ENCODE measurements at regions of chr5 and their contacts with region 1.

Region 1: DNA sequence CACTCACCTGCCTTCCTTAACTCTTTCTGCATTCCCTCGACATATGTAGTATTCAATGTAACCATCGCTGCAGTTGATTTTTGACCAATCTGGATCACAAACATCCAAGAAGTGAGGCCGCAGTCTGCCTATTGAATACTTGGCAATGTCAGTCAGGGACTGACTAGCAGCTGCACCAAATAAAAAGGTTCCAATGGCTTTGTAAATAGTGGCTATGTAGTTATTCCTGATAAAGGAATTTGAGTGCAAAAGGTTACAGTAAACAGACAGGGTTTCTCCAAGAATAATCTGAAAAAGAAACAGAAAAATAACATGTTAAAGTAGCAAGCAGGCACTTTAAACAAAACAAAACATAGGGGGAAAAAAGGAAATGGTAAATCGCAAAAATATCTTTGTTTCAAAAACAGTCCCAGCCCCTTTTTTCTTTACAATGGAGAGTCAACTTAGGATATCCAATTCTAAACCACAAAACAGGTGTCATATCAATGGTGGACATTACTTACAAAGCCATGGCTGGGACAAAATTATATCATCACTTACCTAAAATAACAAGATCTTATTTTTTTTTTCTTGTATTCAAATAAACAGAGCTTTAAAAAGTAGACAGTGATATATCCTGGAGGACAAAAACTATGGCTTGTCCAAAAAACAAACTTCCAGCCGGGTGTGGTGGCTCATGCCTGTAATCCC is 66.8 kb downstream of the PLPP1 start:
- DNase-seq: no peak
- ATAC-seq: no peak
- H3K4me3 ChIP-seq: no peak overlapping the region
- H3K27ac ChIP-seq: no peak overlapping the region
- H3K4me1 ChIP-seq: 0 out of 2 replicates have a peak, but pooled peaks cover 7% of the 10 kb centered on the region
- H3K27me3 ChIP-seq: no peaks in the 10 kb centered on the region
- CTCF ChIP-seq: no peak
- EP300 ChIP-seq: no peak
- POLR2A ChIP-seq: no peak
- RAD21 ChIP-seq: no peak

Region 2: DNA sequence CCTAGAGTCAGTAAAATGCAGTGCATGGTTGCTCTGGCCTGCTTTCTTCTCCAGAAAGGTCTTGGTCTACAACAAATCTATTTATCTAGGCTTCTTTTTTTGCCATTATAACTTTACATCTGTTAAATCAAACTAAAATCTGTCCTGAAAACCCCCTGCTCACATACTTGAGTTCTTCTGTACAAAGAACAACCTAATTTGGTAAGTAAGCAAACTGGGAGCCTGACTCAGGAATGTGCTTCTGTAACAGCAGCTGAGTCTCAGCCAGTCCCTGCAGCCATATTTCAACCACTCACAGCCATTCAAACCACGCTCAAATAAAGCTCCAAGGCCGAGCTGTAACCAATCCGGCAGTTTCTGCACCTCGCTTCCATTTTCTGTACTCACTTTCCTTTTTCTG is 29.0 kb before region 1 on chr5:
- CTCF ChIA-PET with region 1: no interaction called
- POLR2A ChIA-PET with region 1: no interaction called
- in situ Hi-C with region 1: no loop called
- intact Hi-C with region 1: no loop called
- DNase-seq: peak; percentile 20
- ATAC-seq: peak; percentile 49
- H3K4me3 ChIP-seq: no peak overlapping the region
- H3K27ac ChIP-seq: no peak overlapping the region
- H3K4me1 ChIP-seq: 0 out of 2 replicates have a peak, but pooled peaks cover 4% of the 10 kb centered on the region
- H3K27me3 ChIP-seq: no peaks in the 10 kb centered on the region
- CTCF ChIP-seq: no peak
- EP300 ChIP-seq: no peak
- POLR2A ChIP-seq: no peak
- RAD21 ChIP-seq: no peak

Region 3: GRCh38 chr5:55484531-55484930 is 16.5 kb after region 1 on chr5:
- CTCF ChIA-PET with region 1: no interaction called
- POLR2A ChIA-PET with region 1: no interaction called
- in situ Hi-C with region 1: no loop called
- intact Hi-C with region 1: loop called (anchors 1 kb)
- DNase-seq: no peak
- ATAC-seq: no peak
- H3K4me3 ChIP-seq: no peak overlapping the region
- H3K27ac ChIP-seq: no peak overlapping the region
- H3K4me1 ChIP-seq: peaks cover 14% of the 10 kb centered on the region
- H3K27me3 ChIP-seq: no peaks in the 10 kb centered on the region
- CTCF ChIP-seq: no peak
- EP300 ChIP-seq: no peak
- POLR2A ChIP-seq: no peak
- RAD21 ChIP-seq: no peak

Region 4: GRCh38 chr5:56569566-56569965 is 1101.6 kb after region 1 on chr5:
- CTCF ChIA-PET with region 1: no interaction called
- POLR2A ChIA-PET with region 1: no interaction called
- in situ Hi-C with region 1: no loop called
- intact Hi-C with region 1: no loop called
- DNase-seq: no peak
- ATAC-seq: no peak
- H3K4me3 ChIP-seq: no peak overlapping the region
- H3K27ac ChIP-seq: no peak overlapping the region
- H3K4me1 ChIP-seq: peaks cover 27% of the 10 kb centered on the region
- H3K27me3 ChIP-seq: no peaks in the 10 kb centered on the region
- CTCF ChIP-seq: no peak
- EP300 ChIP-seq: no peak
- POLR2A ChIP-seq: no peak
- RAD21 ChIP-seq: no peak

Measured in HepG2 (cell line).